CD14-positive monocyte (primary cell): ENCODE measurements at regions of chr1 and their contacts with region 1.

Region 1: GRCh38 chr1:19485362-19486187 is at the start of gene CAPZB:
- DNase-seq: peak; percentile 83 to 89 (median 86)
- H3K4me3 ChIP-seq: peak within 1 kb of the TSS; percentile 96 to 97 (median 96)
- H3K4me3 Mint-ChIP-seq: peak within 1 kb of the TSS; percentile 95 to 96
- H3K27ac ChIP-seq: peak within 1 kb of the TSS; percentile 90 to 95
- H3K27ac Mint-ChIP-seq: peak within 1 kb of the TSS; percentile 92 to 97 (median 95)
- H3K4me1 ChIP-seq: peaks cover 50 to 69% of the 10 kb centered on the region in 2 donors
- H3K4me1 Mint-ChIP-seq: peaks cover 60% of the 10 kb centered on the region
- H3K27me3 ChIP-seq: no peaks in the 10 kb centered on the region
- H3K27me3 Mint-ChIP-seq: no peaks in the 10 kb centered on the region
- CTCF ChIP-seq: no peak
- polyA plus RNA-seq, gene CAPZB: 290 to 504 (median 407) TPM

Region 2: DNA sequence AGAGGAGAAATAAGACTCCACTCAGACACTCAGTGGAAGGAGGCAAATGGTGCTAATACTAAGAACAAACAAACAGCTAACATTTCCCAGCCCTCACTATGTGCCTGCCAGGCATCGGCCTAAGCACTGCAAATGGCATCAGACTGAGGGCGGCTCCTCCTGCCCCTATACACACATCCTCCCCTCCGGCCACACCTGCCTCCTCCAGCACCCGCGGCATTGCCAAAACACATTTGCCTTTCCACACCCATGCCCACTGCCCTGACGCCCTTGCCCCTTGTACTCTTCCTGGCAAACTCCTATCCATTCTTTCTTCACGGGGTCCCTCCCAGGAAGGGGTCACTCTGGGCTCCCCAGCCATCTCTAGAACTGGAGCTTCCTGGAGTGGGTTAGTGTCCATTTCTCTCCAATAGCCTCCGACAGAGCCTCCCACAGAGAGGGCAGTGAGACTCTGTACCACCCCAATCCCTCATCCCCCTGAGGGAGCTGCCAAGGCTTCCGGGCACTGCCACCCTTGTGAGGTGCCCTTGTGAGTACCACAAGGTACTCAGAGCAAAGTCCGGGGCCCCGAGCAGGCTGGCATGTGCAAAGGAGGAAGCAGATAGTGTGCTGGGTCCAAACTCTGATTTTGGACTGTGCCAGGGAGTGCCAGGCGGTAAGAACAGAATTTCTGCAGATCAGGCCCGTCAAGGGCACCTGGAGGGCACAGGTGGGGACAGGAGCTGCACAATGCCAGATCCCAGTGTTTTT is 198.0 kb before region 1 on chr1:
- intact Hi-C with region 1: no loop called
- DNase-seq: no peak
- H3K4me3 ChIP-seq: no peak overlapping the region
- H3K4me3 Mint-ChIP-seq: peak overlapping the region; percentile 48 to 81
- H3K27ac ChIP-seq: no peak overlapping the region
- H3K27ac Mint-ChIP-seq: peak overlapping the region in 1 of 7 donors; percentile 45
- H3K4me1 ChIP-seq: peaks cover 6 to 11% of the 10 kb centered on the region in 2 donors
- H3K4me1 Mint-ChIP-seq: peaks cover 11% of the 10 kb centered on the region
- H3K27me3 ChIP-seq: peaks cover 6 to 17% of the 10 kb centered on the region in 2 donors
- H3K27me3 Mint-ChIP-seq: peaks cover 14 to 22% (median 20%) of the 10 kb centered on the region in 3 donors
- CTCF ChIP-seq: no peak

Region 3: DNA sequence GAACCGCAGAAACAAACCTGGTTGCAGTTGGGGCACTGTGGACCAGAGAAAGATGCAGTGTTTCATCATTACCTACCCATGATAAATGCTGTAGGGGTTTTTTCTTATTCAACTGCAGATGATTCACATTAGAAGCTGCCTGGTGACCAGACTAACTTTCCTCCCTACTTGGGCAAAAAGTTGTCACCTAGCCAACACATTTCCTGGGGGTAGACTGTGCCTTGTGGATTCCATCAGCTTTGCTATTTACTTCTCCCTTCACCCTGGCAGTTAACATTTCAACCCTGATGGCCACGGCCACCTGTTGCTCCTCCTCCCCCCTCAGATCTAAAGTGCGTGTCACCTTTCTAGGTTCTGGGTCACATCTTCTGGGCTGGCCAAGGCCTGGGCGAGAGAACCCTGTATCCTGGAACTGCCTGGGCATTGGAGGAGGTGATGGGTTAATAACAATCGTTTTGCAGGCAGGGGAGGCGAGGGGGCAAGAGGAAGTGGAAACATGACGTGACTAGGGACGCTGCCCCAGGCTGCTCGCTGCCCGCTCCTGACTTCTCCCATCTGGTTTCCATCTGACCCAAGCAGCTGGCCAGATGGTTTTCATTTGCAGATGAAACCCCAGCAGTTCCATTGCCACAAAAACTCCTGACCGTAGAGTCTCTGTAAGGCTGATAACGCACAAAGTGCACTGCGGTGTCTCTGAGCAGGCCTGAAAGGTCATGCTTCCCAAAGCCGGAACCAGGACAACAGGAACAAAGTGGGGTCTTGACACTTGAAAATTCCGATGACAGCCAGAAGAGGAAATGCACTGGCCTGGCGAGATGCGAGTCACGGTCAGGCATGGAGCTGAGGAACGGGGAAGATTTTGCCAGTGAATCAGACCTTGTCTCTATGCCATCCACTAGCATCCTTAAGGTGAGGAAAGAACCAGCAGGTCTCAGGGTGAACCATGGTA is 36.8 kb before region 1 on chr1:
- intact Hi-C with region 1: loop called in 1 of 2 experiments (anchors 5 kb)
- DNase-seq: peak; percentile 48 to 84 (median 55)
- H3K4me3 ChIP-seq: peak overlapping the region in 1 of 3 experiments; percentile 40
- H3K4me3 Mint-ChIP-seq: peak overlapping the region; percentile 37 to 71
- H3K27ac ChIP-seq: peak overlapping the region; percentile 68 to 75
- H3K27ac Mint-ChIP-seq: peak overlapping the region; percentile 86 to 95 (median 91)
- H3K4me1 ChIP-seq: peaks cover 33% of the 10 kb centered on the region in 2 donors
- H3K4me1 Mint-ChIP-seq: peaks cover 61% of the 10 kb centered on the region
- H3K27me3 ChIP-seq: no peaks in the 10 kb centered on the region
- H3K27me3 Mint-ChIP-seq: peaks cover 0 to 5% (median 0%) of the 10 kb centered on the region in 3 donors
- CTCF ChIP-seq: no peak

Region 4: DNA sequence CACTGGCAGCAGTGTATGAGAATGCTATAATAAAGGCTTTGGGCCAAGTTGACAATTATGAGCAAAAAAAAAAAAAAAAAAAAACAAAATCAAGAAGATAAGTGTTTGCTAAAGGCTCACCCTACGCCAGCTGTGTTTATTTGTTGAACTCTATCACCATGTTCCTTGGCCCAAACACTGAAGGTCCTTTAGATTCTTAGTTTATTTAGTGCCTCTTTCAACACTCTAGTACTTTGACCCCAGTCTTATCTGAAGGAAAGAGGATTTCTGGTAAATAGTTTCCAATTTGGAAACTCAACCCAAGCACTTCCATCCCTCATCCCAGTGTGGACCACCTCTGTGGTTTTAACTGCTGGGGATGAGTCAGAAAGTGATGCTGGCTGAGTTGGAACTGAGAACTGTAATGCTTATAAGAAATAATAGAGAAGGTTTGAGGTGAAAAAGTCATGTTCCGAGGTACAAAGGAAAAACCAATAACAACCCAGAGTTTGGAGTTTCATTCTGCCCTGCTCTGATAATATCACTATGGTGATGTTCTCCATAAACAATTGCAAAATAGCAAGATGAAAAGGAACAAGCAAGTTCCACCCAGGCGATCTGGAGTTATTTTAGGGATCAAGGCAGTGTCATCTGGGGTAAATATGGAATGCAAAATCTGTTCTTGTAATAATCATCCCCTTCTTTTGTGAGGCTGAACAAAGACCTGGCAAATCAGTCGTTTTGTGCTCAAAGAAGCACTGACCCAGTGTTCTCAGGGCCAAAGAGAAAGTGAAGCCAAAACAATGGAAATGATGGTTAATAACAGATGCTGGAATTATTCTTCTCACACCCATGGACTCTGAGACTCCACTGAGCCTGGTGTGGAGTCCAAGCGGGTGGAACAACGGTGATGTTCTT is 19.5 kb after region 1 on chr1:
- intact Hi-C with region 1: loop called in 1 of 2 experiments (anchors 2 kb)
- DNase-seq: peak; percentile 46 to 56 (median 55)
- H3K4me3 ChIP-seq: peak overlapping the region in 1 of 3 experiments; percentile 55
- H3K4me3 Mint-ChIP-seq: peak overlapping the region; percentile 37 to 78
- H3K27ac ChIP-seq: peak overlapping the region; percentile 97 to 99
- H3K27ac Mint-ChIP-seq: peak overlapping the region; percentile 98 to 100 (median 99)
- H3K4me1 ChIP-seq: peaks cover 63 to 68% of the 10 kb centered on the region in 2 donors
- H3K4me1 Mint-ChIP-seq: peaks cover 62% of the 10 kb centered on the region
- H3K27me3 ChIP-seq: no peaks in the 10 kb centered on the region
- H3K27me3 Mint-ChIP-seq: peaks cover 0 to 2% (median 2%) of the 10 kb centered on the region in 3 donors
- CTCF ChIP-seq: no peak

Region 5: DNA sequence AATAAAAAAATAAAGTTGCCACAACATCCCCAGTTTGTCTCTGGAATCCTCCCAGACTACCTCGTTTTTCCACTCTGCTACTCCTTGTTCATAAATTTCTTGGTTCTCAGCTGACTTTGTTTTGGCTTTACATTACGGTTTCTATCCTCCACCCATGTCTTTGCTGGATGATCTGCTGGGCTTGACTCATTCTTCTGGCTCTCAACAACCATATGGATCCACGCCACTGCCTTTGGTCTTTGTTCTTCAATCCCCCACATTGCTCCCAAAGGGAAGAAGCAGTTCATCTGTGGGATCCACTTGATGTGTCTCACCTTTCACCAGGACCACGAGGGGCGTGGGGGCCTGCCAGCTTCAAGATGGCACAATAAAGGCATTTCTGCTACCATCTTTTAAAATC is 91.5 kb after region 1 on chr1:
- intact Hi-C with region 1: loop called (anchors 5 kb)
- DNase-seq: no peak
- H3K4me3 ChIP-seq: no peak overlapping the region
- H3K4me3 Mint-ChIP-seq: peak overlapping the region in 1 of 2 donors; percentile 56
- H3K27ac ChIP-seq: no peak overlapping the region
- H3K27ac Mint-ChIP-seq: no peak overlapping the region
- H3K4me1 ChIP-seq: peaks cover 25 to 29% of the 10 kb centered on the region in 2 donors
- H3K4me1 Mint-ChIP-seq: peaks cover 31% of the 10 kb centered on the region
- H3K27me3 ChIP-seq: no peaks in the 10 kb centered on the region
- H3K27me3 Mint-ChIP-seq: peaks cover 11 to 14% (median 11%) of the 10 kb centered on the region in 3 donors
- CTCF ChIP-seq: no peak

Region 6: GRCh38 chr1:19582302-19582701 is 96.7 kb after region 1 on chr1:
- intact Hi-C with region 1: loop called (anchors 5 kb)
- DNase-seq: peak; percentile 55 to 74 (median 68)
- H3K4me3 ChIP-seq: no peak overlapping the region
- H3K4me3 Mint-ChIP-seq: no peak overlapping the region
- H3K27ac ChIP-seq: no peak overlapping the region
- H3K27ac Mint-ChIP-seq: no peak overlapping the region
- H3K4me1 ChIP-seq: peaks cover 25 to 31% of the 10 kb centered on the region in 2 donors
- H3K4me1 Mint-ChIP-seq: peaks cover 35% of the 10 kb centered on the region
- H3K27me3 ChIP-seq: no peaks in the 10 kb centered on the region
- H3K27me3 Mint-ChIP-seq: peaks cover 2 to 16% (median 3%) of the 10 kb centered on the region in 3 donors
- CTCF ChIP-seq: peak; percentile 96

Region 7: DNA sequence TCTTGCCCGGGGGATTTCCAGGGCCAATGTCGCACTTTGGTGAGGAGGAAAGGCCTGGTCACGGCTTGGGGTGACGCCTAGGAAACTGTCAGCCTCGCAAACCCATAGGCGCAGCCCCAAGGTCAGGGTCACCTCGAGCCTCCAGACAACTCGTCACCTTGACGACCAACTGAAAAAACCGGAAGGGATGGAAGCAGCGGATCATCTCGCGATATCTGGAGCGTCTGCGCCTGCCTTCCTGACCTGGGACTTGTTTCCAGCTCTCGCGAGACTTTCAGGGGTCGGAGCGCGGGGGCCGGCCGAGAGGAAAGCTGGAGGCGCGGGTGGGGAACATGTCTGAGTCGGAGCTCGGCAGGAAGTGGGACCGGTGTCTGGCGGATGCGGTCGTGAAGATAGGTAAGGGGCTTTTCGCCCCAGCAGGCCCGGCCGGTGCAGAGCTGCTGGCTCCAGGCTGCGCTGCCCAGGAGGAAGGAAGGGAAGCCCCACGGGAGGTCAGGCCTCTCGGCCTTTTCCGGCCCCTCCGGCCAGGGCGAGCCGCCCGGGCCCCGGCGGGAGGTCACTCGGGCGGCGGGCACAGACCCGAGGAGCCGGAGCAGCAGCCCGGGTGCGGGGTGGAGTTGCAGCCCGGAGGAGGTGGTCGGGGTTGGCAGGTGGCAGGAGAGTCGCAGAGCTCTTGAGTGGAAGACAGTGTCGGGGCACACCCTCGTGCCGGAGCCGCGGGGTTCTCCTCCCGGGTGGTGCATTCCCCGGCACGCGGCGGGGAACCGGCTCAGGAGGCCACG is 111.3 kb after region 1 on chr1:
- intact Hi-C with region 1: loop called in 1 of 2 experiments (anchors 5 kb)
- DNase-seq: peak; percentile 99
- H3K4me3 ChIP-seq: peak overlapping the region; percentile 56 to 81 (median 69)
- H3K4me3 Mint-ChIP-seq: peak overlapping the region; percentile 98 to 100
- H3K27ac ChIP-seq: peak overlapping the region; percentile 94 to 95
- H3K27ac Mint-ChIP-seq: peak overlapping the region; percentile 98 to 100 (median 98)
- H3K4me1 ChIP-seq: peaks cover 20 to 28% of the 10 kb centered on the region in 2 donors
- H3K4me1 Mint-ChIP-seq: peaks cover 31% of the 10 kb centered on the region
- H3K27me3 ChIP-seq: no peaks in the 10 kb centered on the region
- H3K27me3 Mint-ChIP-seq: peaks cover 0 to 2% (median 1%) of the 10 kb centered on the region in 3 donors
- CTCF ChIP-seq: no peak